ENCODE measurements at regions of chr17 and their contacts with region 1.

Region 1: DNA sequence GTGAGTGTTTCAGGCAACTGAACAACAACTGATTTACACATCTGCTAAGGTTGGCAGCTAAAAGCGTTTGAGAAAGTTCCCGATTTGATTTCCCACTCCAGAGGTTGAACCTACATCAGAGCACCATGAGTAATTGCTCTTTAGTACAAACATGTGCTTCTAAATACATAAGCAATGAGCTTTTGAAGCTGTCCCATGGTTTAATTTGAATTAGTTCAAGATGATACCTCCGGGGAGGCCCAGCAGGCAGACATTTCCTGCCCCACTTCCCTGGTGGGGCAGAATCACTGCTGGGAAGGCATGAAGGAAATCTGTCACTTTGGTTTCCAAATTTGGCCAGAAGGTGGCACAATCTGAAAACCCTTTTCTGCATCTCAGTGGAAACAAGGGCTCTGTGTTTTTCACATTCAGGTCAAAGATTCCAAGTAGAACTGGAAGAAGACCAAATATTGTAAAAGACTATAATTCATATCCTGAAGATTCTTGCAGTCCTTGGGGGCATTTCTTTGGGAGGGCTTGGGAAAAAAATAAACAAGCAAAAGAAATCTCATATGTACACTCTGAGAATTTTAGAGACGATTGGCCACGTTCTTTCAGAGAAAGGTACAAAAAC is 176.2 kb upstream of the FAM20A start:
- DNase-seq: peak; percentile 34
- CTCF ChIP-seq: peak; percentile 64

Region 2: GRCh38 chr17:69235338-69235930 is 458.1 kb after region 1 on chr17:
- CTCF ChIA-PET with region 1: interaction called, 32 read pairs
- POLR2A ChIA-PET with region 1: interaction called, 3 read pairs
- DNase-seq: peak; percentile 48
- CTCF ChIP-seq: peak; percentile 66

Region 3: GRCh38 chr17:69246726-69247375 is 469.5 kb after region 1 on chr17:
- CTCF ChIA-PET with region 1: interaction called, 42 read pairs
- POLR2A ChIA-PET with region 1: no interaction called
- DNase-seq: peak; percentile 35
- CTCF ChIP-seq: peak; percentile 46